Esophagus muscularis mucosa (tissue), 4 donors: ENCODE measurements at regions of chr5 and their contacts with region 1.

Region 1: GRCh38 chr5:150449517-150450339 is at the start of gene RPS14:
- DNase-seq: peak; percentile 99
- H3K4me3 ChIP-seq: peak within 1 kb of the TSS; percentile 63 to 86 (median 72)
- H3K27ac ChIP-seq: peak within 1 kb of the TSS; percentile 88 to 95 (median 92)
- H3K4me1 ChIP-seq: peaks cover 13 to 43% (median 26%) of the 10 kb centered on the region in 4 donors
- H3K27me3 ChIP-seq: no peaks in the 10 kb centered on the region
- CTCF ChIP-seq: peak; percentile 88 to 94 (median 93)
- EP300 ChIP-seq: no peak
- POLR2A ChIP-seq: peak; percentile 92
- total RNA-seq, gene RPS14: 1,492 to 3,727 (median 2,626) TPM

Region 2: DNA sequence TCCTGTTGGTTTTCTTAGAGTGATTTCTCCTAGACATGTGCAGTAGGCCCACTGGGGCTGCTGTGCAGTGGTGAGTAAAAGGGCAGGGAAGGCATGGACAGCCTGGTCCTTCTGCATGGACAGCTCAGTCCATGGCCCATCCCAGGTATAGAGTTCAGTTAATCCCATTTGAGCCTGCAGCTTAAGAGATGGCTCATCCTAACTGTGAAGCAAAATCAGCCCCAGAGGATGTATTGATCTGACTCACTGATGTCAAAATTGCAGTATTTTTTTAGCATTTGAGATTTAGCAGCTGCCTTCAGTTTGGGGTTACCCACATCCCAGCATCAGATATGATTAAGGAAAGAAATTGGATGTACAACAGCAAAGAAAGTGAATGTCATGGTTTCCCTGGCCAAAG is 598.5 kb before region 1 on chr5:
- intact Hi-C with region 1: no loop called
- DNase-seq: no peak
- H3K4me3 ChIP-seq: no peak overlapping the region
- H3K27ac ChIP-seq: no peak overlapping the region
- H3K4me1 ChIP-seq: peaks cover 7 to 11% (median 10%) of the 10 kb centered on the region in 4 donors
- H3K27me3 ChIP-seq: no peaks in the 10 kb centered on the region
- CTCF ChIP-seq: no peak
- EP300 ChIP-seq: no peak
- POLR2A ChIP-seq: no peak

Region 3: DNA sequence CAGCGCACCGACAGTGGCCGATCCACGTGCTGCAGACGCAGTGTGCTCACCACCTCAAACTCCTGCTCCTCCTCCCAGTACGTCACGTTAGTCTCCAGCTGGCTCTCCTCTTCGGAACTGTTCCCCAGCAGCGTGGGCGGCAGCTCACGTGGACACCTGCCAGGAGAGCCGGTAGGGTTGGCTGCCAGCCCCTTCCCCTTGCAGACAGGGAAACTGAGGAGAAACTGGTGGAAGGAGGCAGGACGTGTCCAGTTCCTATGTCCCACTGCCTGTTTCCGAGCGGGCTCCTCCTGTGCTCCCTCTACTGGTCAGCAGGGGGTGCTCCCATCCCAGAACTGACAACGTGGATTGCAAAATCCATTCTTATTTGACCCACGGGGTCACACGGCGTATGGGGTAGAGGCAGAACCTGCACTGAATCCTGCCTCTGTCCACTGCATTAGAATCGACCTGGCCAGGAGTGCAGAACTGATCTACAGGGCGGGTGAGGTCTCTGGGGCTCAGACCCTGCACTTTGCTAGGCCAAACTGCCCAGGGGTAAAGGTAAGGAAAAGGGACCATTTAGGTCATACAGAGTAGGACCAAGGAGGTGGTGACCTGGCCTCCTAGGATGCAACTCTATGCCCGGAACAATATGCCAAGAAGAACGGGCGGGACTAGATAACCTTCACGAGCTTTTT is 319.8 kb before region 1 on chr5:
- intact Hi-C with region 1: loop called (anchors 10 kb)
- DNase-seq: peak; percentile 95
- H3K4me3 ChIP-seq: peak overlapping the region in 1 of 4 donors; percentile 33
- H3K27ac ChIP-seq: peak overlapping the region; percentile 16 to 30 (median 26)
- H3K4me1 ChIP-seq: peaks cover 27 to 62% (median 44%) of the 10 kb centered on the region in 4 donors
- H3K27me3 ChIP-seq: no peaks in the 10 kb centered on the region
- CTCF ChIP-seq: peak; percentile 95 to 97 (median 97)
- EP300 ChIP-seq: no peak
- POLR2A ChIP-seq: no peak